ENCODE measurements at regions of chr14 and their contacts with region 1.

Region 1: DNA sequence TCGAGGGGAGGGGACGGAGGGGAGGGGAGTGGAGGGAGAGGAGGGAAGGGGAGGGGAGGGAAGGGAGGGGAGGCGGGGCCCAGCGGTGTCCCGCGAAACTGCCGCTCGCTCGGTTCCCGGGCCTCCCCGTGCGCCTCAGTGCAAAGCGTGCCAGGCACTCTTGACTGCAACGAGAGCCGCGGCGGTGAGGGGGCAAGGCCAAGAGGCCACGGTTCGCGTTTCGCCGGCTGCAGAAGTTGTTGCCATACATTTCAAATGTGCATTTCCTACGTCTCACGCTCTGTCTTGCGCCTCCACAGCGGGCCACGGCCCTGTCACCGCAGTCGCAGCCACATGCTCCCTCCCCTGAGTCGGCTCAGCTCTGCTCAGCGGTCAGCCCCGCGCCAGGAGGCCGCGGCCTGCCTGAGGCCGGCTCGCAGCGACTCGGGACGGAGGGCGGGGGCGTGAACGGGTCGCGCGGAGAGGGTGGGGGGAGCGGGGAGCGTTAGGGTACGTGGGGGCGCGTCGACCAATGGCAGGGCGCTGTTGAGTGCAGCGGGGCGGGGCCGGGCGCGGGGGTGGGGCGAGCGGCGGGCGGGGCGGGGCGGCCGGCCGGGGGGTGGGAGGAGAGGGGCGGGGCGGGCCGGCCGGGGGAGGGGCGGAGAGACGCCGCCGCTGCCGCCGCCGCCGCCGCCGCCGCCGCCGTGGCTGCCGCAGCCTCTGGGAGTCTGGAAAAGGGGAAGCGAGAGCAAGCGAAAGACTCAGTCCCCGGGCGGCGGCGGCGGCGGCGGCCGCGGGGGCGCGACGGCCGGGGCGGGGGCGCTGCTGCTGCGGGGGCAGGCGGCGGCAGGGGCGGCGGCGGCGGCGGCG is at the start of gene PPP2R5C:
- DNase-seq: peak; percentile 75 to 98 (median 93)

Region 2: GRCh38 chr14:101947906-101948665 is 186.8 kb after region 1 on chr14:
- intact Hi-C with region 1: loop called (anchors 5 kb)
- DNase-seq: peak; percentile 95 to 100 (median 99)